Mammary epithelial cell (primary cell): ENCODE measurements at regions of chr19 and their contacts with region 1.

Region 1: DNA sequence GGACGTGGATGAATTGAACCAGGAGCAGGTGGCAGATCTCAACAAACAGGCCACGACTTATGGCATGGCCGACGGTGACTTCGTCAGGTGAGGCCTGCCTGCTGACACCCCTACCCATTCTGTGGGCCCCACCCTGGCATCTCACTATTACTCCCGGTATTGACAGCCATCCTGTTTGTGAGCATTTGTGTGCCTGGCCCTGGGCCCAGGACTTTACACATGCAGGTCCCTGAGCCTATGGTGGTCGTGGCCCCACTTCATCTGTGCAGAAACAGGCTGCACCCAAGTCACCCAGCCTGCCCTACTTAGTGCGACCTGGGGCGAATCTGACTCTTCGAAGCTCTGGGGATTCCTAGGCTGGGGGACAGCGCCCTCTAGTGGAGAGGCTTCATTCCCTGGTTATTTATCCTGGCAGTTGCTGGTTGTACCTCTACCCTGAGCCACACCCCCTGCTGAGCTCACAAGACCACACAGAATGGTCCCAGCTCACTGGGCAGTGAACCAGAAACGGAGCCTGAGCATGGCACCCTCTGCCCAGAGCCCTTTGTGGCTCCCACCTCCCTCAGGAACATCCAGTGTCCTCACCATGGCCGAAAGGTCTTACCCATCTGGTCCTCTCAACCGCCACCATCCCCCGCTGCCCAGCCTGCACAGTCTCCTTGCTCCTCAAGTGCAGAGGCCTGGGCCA is 16.9 kb downstream of the ZNF296 start:
- DNase-seq: peak; percentile 70
- H3K4me3 ChIP-seq: no peak overlapping the region
- H3K27ac ChIP-seq: no peak overlapping the region
- H3K4me1 ChIP-seq: peaks cover 8% of the 10 kb centered on the region
- H3K27me3 ChIP-seq: no peaks in the 10 kb centered on the region
- CTCF ChIP-seq: peak; percentile 91 to 95

Region 2: DNA sequence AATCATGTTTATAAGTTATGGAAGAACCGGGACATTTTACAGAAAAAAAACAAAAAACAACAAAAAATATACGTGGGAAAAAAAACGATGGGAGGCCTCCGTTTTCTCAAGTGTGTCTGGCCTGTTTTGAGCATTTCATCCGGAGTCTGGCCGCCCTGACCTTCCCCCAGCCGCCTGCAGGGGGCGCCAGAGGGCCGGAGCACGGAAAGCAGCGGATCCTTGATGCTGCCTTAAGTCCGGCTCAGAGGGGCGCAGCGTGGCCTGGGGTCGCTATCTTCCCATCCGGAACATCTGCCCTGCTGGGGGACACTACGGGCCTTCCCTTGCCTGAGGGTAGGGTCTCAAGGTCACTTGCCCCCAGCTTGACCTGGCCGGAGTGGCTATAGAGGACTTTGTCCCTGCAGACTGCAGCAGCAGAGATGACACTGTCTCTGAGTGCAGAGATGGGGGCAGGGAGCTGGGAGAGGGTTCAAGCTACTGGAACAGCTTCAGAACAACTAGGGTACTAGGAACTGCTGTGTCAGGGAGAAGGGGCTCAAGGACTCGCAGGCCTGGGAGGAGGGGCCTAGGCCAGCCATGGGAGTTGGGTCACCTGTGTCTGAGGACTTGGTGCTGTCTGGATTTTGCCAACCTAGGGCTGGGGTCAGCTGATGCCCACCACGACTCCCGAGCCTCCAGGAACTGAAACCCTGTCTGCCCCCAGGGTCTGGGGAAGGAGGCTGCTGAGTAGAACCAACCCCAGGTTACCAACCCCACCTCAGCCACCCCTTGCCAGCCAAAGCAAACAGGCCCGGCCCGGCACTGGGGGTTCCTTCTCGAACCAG is 155.6 kb before region 1 on chr19:
- CTCF ChIA-PET with region 1: no interaction called
- dilution Hi-C with region 1: no loop called
- in situ Hi-C with region 1: no loop called
- intact Hi-C with region 1: loop called (anchors 1 kb)
- DNase-seq: no peak
- H3K4me3 ChIP-seq: no peak overlapping the region
- H3K27ac ChIP-seq: no peak overlapping the region
- H3K4me1 ChIP-seq: peaks cover 4% of the 10 kb centered on the region
- H3K27me3 ChIP-seq: no peaks in the 10 kb centered on the region
- CTCF ChIP-seq: peak; percentile 94 to 98

Region 3: DNA sequence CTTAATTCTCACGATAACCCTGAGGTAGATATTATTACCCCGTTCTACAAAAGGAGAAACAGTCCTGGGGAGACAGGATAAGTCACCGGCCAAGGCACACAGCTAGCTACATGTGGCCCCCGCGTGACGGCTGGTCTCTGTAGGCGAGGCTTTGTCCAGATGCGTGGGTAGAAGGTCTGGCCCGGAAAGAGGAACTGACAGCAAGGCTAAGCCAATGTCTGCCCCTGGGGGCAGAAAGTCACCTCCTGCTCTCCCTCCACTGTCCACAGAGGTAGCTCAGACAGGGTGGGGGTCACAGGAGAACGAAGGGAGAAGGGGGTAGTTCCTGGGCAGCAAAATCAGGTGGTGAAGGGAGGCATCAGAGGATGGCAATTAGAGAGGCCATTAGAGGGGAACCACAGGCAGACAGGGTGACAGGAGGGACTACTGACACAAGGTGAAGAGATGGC is 115.6 kb before region 1 on chr19:
- CTCF ChIA-PET with region 1: no interaction called
- dilution Hi-C with region 1: no loop called
- in situ Hi-C with region 1: no loop called
- intact Hi-C with region 1: no loop called
- DNase-seq: peak; percentile 14
- H3K4me3 ChIP-seq: no peak overlapping the region
- H3K27ac ChIP-seq: no peak overlapping the region
- H3K4me1 ChIP-seq: peaks cover 8% of the 10 kb centered on the region
- H3K27me3 ChIP-seq: no peaks in the 10 kb centered on the region
- CTCF ChIP-seq: no peak

Region 4: DNA sequence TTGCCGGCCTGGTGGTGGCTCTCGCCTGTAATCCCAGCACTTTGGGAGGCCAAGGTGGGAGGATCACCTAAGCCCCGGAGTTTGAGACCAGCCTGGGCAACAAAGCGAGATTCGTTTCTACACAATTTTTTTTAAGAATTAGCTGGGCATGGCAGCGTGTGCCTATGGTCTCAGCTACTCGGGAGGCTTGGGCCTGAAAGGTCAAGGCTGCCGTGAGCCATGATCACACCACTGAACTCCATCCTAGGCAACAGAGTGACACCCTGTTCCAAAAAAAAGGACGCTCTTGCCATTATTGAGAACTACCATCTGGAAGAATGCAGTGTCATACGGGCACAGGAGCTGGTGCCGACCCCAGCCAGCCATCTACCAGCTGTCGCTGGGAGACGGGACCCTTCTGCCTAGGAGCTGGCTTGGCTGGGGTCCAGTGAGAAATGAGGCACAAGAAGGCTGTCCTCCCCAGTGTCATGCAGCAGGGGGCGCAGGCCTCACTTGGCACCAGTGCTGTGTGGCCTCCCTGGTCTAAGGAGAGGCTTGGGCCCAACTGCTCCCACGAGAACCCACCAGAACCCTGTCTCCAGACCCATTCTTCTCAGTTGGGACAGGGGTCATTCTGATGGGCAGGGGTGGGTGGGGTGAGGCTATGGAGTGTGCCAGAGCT is 70.4 kb before region 1 on chr19:
- CTCF ChIA-PET with region 1: no interaction called
- dilution Hi-C with region 1: no loop called
- in situ Hi-C with region 1: no loop called
- intact Hi-C with region 1: loop called (anchors 1 kb)
- DNase-seq: peak; percentile 35
- H3K4me3 ChIP-seq: no peak overlapping the region
- H3K27ac ChIP-seq: no peak overlapping the region
- H3K4me1 ChIP-seq: no peaks in the 10 kb centered on the region
- H3K27me3 ChIP-seq: no peaks in the 10 kb centered on the region
- CTCF ChIP-seq: peak; percentile 75 to 79

Region 5: GRCh38 chr19:45016388-45017319 is 42.8 kb before region 1 on chr19:
- CTCF ChIA-PET with region 1: no interaction called
- dilution Hi-C with region 1: no loop called
- in situ Hi-C with region 1: no loop called
- intact Hi-C with region 1: loop called (anchors 1 kb)
- DNase-seq: peak; percentile 67
- H3K4me3 ChIP-seq: no peak overlapping the region
- H3K27ac ChIP-seq: no peak overlapping the region
- H3K4me1 ChIP-seq: no peaks in the 10 kb centered on the region
- H3K27me3 ChIP-seq: no peaks in the 10 kb centered on the region
- CTCF ChIP-seq: peak; percentile 63

Region 6: GRCh38 chr19:45047188-45047797 is 12.1 kb before region 1 on chr19:
- CTCF ChIA-PET with region 1: no interaction called
- dilution Hi-C with region 1: no loop called
- in situ Hi-C with region 1: no loop called
- intact Hi-C with region 1: no loop called
- DNase-seq: no peak
- H3K4me3 ChIP-seq: no peak overlapping the region
- H3K27ac ChIP-seq: no peak overlapping the region
- H3K4me1 ChIP-seq: peaks cover 21% of the 10 kb centered on the region
- H3K27me3 ChIP-seq: no peaks in the 10 kb centered on the region
- CTCF ChIP-seq: no peak

Region 7: GRCh38 chr19:45103156-45103507 is 43.7 kb after region 1 on chr19:
- CTCF ChIA-PET with region 1: no interaction called
- dilution Hi-C with region 1: no loop called
- in situ Hi-C with region 1: no loop called
- intact Hi-C with region 1: no loop called
- DNase-seq: no peak
- H3K4me3 ChIP-seq: peak overlapping the region in 1 of 3 experiments; percentile 6
- H3K27ac ChIP-seq: no peak overlapping the region
- H3K4me1 ChIP-seq: peaks cover 45% of the 10 kb centered on the region
- H3K27me3 ChIP-seq: no peaks in the 10 kb centered on the region
- CTCF ChIP-seq: no peak